ENCODE measurements at regions of chr16 and their contacts with region 1.

Region 1: DNA sequence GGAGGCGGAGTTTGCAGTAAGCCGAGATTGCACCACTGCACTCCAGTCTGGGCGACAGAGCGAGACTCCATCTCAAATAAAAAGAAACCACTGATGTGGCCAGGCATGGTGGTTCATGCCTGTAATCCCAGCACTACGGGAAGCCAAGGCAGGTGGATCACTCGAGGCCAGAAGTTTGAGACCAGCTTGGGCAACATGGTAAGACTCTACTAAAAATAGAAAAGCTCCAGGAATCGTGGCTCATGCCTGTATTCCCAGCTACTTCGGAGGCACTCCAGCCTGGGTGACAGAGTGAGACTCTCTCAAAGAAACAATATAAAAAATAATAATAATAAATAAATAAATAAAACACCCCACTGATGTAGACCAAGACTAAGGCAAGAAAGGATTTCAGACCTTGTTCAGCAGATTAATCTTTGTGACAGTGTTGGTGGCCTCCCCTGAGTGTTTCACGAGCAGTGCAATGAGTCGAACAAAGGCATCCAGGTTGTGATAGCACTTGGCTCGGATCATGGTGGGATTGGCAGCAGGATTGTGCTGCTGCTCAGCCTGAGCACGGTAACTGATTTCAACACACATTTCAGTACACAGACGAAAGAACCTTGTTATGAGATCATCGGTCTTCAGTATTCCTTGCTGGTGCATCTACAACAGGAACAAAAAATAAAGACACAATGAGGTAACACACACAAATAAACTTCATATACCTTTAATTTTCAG is 18.6 kb downstream of the SETD6 start:
- DNase-seq: no peak
- ATAC-seq: peak in 7 of 8 donors; percentile 56 to 94 (median 79)
- H3K4me3 ChIP-seq: no peak overlapping the region
- H3K27ac ChIP-seq: peak overlapping the region in 8 of 10 donors; percentile 19 to 58 (median 37)
- H3K4me1 ChIP-seq: peaks cover 0 to 30% (median 0%) of the 10 kb centered on the region in 9 donors
- H3K27me3 ChIP-seq: no peaks in the 10 kb centered on the region
- CTCF ChIP-seq: no peak

Region 2: GRCh38 chr16:58464047-58464915 is 69.6 kb before region 1 on chr16:
- intact Hi-C with region 1: no loop called
- DNase-seq: peak; percentile 46 to 62
- ATAC-seq: peak; percentile 34 to 61 (median 52)
- H3K4me3 ChIP-seq: peak overlapping the region; percentile 61 to 96 (median 84)
- H3K27ac ChIP-seq: peak overlapping the region; percentile 68 to 98 (median 94)
- H3K4me1 ChIP-seq: peaks cover 0 to 69% (median 33%) of the 10 kb centered on the region in 9 donors
- H3K27me3 ChIP-seq: peaks cover 0 to 76% (median 13%) of the 10 kb centered on the region in 7 donors
- CTCF ChIP-seq: peak in 1 of 9 donors; percentile 16

Region 3: GRCh38 chr16:58577141-58577540 is 43.2 kb after region 1 on chr16:
- intact Hi-C with region 1: loop called in 3 of 10 experiments (anchors 5 to 10 kb)
- DNase-seq: no peak
- ATAC-seq: no peak
- H3K4me3 ChIP-seq: no peak overlapping the region
- H3K27ac ChIP-seq: peak overlapping the region in 1 of 10 donors; percentile 34
- H3K4me1 ChIP-seq: peaks cover 0 to 17% (median 0%) of the 10 kb centered on the region in 9 donors
- H3K27me3 ChIP-seq: no peaks in the 10 kb centered on the region
- CTCF ChIP-seq: no peak

Region 4: GRCh38 chr16:58582971-58583765 is 49.3 kb after region 1 on chr16:
- intact Hi-C with region 1: loop called in 3 of 10 experiments (anchors 5 to 10 kb)
- DNase-seq: no peak
- ATAC-seq: peak in 1 of 8 donors; percentile 34
- H3K4me3 ChIP-seq: no peak overlapping the region
- H3K27ac ChIP-seq: no peak overlapping the region
- H3K4me1 ChIP-seq: peaks cover 0 to 15% (median 0%) of the 10 kb centered on the region in 9 donors
- H3K27me3 ChIP-seq: no peaks in the 10 kb centered on the region
- CTCF ChIP-seq: no peak

Measured in heart right ventricle (tissue), 16 donors.